AG04450 (cell line): ENCODE measurements at regions of chr9 and their contacts with region 1.

Region 1: DNA sequence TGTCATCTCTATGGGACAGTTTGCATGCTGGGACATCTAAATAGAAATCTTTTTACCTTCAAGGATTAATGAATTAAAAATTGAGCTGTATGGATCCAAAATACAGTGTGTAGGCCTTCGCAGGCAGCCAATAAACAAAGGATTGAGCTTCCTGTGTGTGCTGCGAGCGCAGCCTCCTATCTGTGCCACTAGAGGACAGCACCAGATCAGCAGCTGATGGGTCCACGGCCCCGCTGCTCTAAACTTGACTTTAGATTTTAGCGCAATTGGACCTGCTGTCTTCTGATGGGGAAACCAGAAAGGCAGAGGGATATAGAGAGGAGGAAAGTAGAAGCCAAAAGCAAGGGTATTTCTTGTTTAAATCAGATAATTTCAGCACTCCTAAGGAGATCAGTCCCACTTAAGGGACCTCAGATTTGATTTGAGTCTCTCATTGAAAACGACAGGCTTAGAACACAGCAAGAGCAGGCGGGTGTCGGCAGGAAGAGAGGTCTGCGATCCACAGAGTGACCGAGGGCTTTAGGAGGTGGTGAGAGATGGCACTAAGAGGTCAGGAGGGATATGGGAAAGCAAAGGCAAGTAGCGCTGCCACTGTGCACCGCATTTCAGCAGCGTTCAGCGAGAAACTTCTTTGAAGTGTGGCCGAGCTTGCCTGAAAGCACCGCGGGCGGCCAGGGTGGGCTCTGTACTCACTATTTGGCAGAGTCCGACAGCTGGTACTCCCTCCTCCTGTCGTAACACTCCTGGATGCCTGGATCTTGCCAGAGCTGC is 214.3 kb downstream of the GNA14 start:
- DNase-seq: no peak
- H3K4me3 ChIP-seq: no peak overlapping the region
- H3K27ac ChIP-seq: no peak overlapping the region
- H3K27me3 ChIP-seq: no peaks in the 10 kb centered on the region
- CTCF ChIP-seq: peak; percentile 100

Region 2: DNA sequence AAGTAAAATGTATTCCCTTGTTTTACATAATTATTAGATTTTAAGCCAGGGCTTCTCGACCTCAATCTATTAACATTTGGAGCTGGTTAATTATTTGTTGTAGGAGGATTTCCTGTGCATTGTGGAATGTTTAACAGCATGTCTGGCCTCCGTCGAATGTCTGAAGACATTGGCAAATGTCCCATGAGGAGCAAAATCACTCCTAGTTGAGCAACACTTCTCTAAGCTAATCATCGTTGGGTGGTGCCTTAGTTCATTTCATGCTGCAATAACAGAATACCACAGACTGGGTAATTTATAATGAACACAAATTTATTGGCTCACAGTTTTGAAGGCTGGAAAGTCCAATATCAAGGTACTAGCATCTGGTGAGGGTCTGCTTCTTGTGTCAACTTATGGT is 270.0 kb before region 1 on chr9:
- CTCF ChIA-PET with region 1: interaction called, 13 read pairs
- POLR2A ChIA-PET with region 1: interaction called, 3 read pairs
- DNase-seq: no peak
- H3K4me3 ChIP-seq: no peak overlapping the region
- H3K27ac ChIP-seq: no peak overlapping the region
- H3K27me3 ChIP-seq: peaks cover 2% of the 10 kb centered on the region
- CTCF ChIP-seq: no peak

Region 3: DNA sequence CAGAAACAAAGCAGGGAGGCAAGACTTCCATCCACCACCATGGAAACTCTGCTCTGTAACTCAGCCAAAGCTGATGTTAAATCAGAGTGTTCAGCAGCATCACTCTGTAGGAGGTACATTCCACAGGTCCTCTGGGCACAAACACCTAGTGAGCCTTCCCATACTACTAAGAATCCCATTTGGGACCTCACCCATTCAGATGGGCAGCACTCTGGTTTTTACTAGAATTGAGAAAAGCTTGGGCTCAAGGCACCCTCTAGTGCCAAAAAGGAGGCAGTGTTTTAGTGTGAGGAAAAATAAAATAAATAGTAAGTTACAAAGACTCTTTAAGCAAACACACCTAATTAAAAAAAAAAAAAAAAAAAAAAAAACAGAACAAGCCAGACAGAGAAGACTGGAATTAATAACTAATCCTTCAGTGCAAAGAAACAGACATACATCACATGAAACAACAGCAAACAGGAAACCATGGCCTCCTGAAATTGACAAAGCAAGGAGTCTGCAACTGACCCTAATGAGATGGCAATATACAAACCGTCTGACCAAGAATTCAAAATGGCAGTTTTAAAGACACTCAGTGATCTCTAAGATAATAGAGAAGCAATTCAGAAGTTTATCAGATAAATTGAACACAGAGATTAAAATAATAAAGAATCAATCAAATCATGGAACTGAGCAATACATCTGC is 54.7 kb after region 1 on chr9:
- CTCF ChIA-PET with region 1: interaction called, 25 read pairs
- POLR2A ChIA-PET with region 1: no interaction called
- DNase-seq: no peak
- H3K4me3 ChIP-seq: no peak overlapping the region
- H3K27ac ChIP-seq: no peak overlapping the region
- H3K27me3 ChIP-seq: no peaks in the 10 kb centered on the region
- CTCF ChIP-seq: peak; percentile 63

Region 4: DNA sequence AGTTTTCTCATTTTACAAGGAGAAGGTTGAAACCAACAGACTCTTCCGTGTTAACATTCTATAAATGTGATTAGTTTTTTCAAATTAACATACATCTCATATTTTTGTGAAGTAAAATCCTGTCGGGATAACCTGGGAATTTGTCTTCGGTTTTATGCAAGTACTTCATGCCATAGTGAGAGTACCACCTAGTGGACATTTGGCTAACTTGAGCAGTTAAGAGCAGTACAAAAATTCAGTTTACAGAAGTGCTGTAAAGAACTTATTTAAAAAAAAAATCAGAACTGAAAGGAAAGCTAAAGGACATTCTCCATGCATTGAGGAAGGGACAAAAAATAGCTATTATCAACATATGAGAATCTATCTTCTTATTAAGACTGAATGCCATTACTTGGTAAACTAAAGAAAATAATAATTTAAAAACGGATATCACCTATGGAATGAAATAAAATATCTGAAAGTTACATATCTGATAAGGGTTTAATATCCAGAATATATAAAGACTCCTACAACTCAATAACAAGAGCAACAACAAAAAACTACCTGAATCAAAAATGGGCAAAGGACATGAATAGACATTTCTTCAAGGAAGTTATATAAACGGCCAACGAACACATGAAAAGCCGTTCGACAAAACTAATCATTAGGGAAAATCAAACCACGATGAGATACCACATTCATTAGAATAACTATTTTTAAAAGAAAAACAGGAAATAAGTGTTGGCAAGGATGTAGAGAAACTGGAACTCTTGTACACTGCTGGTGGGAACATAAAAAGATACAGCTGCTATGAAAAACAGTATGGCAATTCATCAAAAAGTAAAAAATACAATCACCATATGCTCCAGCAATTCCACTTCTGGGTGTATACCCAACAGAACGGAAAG is 331.3 kb after region 1 on chr9:
- CTCF ChIA-PET with region 1: interaction called, 27 read pairs
- POLR2A ChIA-PET with region 1: no interaction called
- DNase-seq: peak; percentile 50
- H3K4me3 ChIP-seq: no peak overlapping the region
- H3K27ac ChIP-seq: no peak overlapping the region
- H3K27me3 ChIP-seq: no peaks in the 10 kb centered on the region
- CTCF ChIP-seq: peak; percentile 73

Region 5: GRCh38 chr9:78121488-78121887 is 687.6 kb after region 1 on chr9:
- CTCF ChIA-PET with region 1: interaction called, 17 read pairs
- POLR2A ChIA-PET with region 1: no interaction called
- DNase-seq: peak; percentile 20
- H3K4me3 ChIP-seq: no peak overlapping the region
- H3K27ac ChIP-seq: no peak overlapping the region
- H3K27me3 ChIP-seq: no peaks in the 10 kb centered on the region
- CTCF ChIP-seq: peak; percentile 84